Left cardiac atrium (tissue), 4 donors: ENCODE measurements at regions of chr20 and their contacts with region 1.

Region 1: DNA sequence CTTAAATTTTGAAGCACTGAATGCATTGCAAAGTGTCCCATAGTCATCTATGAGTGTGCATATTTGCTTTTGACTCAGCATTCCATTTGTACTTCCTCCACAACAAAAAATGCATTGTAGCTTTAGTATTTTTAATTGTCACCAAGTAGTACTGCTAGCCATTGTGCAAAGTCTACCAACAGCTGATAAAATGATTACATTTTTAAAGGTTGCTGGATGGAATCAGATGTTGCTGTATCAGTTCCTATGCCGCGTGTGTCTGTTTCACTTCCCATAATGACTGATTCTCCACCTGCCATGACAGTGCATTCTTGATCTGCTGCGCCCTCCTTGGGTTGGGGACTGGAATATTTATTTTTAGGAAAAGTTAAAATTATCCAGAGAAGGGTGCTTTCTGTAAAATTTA is 41.2 kb downstream of the SLX4IP start:
- DNase-seq: no peak
- ATAC-seq: peak in 1 of 2 donors; percentile 47

Region 2: DNA sequence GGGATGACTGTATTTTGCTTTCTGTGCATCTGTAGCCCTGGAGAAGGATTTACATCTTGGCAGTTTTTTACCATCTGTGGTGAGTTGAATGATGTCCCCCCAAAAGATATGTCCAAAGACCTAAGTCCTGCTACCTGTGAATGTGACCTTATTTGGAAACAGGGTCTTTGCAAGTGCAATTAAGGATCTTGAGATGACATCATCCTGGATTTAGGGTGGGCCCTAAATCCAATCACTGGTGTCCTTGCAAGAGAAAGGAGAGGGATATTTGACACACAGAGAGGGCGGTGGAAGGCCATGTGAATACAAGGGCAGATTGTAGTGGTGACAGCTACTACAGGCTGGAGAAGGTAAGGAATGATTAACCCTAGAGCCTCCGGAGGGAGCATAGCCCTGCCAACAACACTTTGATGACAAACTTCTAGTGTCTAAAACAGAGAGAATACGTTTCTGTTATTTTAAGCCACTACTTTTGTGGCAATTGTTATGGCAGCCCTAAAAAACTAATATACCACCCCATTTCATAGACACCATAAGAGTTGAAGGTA is 77.4 kb before region 1 on chr20:
- intact Hi-C with region 1: no loop called
- DNase-seq: no peak
- ATAC-seq: no peak

Region 3: DNA sequence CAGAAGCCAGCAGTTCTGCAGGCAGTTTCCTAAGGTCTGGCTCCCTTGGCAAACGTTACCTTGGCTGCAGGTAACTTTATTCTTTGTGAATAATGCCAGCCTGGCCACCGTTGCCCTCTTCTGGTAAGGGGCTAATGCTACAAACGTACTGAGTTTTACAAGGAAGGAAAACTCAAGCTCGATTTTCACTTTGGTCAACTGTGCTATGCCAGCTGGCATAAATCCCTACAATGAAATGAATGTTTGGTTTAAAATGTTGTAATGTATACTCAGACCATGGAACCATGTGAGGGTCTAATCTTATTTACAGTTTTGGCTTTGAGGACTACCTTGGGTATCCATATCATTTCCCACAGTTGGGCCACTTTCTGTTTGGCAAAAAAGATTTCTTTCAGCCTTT is 60.2 kb after region 1 on chr20:
- intact Hi-C with region 1: loop called in 1 of 2 experiments (anchors 10 kb)
- DNase-seq: no peak
- ATAC-seq: no peak

Region 4: GRCh38 chr20:10671221-10671918 is 195.0 kb after region 1 on chr20:
- intact Hi-C with region 1: no loop called
- DNase-seq: peak; percentile 89
- ATAC-seq: peak; percentile 45 to 63

Region 5: GRCh38 chr20:10927936-10928840 is 451.9 kb after region 1 on chr20:
- intact Hi-C with region 1: no loop called
- DNase-seq: peak; percentile 22
- ATAC-seq: peak in 1 of 2 donors; percentile 31

Region 6: GRCh38 chr20:11274141-11274594 is 797.8 kb after region 1 on chr20:
- intact Hi-C with region 1: loop called in 1 of 2 experiments (anchors 10 kb)
- DNase-seq: peak; percentile 25
- ATAC-seq: peak; percentile 89 to 90